ENCODE measurements at regions of chr9 and their contacts with region 1.

Region 1: DNA sequence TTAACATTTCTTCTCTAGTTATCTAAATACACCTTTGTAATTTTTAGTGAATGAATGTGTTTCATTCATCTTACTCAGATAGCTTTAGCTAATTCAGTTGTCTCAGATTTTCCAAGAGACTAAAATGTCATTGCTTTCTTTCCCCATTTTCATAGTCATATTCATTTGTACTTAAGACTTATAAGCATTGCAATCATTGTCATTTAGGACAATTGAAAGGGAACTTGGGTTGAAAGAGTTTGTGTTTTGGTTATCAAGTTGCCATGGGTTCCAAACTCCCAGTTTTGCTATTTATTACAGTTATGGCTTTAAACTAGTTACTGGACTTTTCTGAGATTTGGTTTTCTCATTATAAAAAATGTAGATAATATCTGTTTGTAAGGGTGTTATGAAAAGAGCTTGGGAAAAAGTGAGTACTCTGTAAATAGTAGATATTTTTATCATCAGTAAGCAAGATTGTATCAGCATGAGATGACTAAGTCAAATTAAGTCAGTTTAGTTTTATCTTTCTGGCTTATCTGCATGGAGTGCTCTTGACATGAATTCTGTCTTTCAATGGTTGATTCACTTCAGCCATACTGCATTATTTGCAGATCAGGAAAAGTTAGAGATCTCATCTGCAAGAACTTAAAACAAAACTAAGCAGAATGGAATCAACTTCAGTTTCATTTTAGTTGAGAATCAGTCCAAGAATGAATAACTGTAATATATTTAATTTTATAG is 107.5 kb downstream of the PBX3 start:
- DNase-seq: no peak
- ATAC-seq: no peak
- H3K4me3 ChIP-seq: no peak overlapping the region
- H3K4me3 Mint-ChIP-seq: no peak overlapping the region
- H3K27ac ChIP-seq: no peak overlapping the region
- H3K27ac Mint-ChIP-seq: no peak overlapping the region
- H3K4me1 ChIP-seq: no peaks in the 10 kb centered on the region
- H3K4me1 Mint-ChIP-seq: peaks cover 8% of the 10 kb centered on the region
- H3K27me3 ChIP-seq: no peaks in the 10 kb centered on the region
- H3K27me3 Mint-ChIP-seq: no peaks in the 10 kb centered on the region
- CTCF ChIP-seq: no peak

Region 2: DNA sequence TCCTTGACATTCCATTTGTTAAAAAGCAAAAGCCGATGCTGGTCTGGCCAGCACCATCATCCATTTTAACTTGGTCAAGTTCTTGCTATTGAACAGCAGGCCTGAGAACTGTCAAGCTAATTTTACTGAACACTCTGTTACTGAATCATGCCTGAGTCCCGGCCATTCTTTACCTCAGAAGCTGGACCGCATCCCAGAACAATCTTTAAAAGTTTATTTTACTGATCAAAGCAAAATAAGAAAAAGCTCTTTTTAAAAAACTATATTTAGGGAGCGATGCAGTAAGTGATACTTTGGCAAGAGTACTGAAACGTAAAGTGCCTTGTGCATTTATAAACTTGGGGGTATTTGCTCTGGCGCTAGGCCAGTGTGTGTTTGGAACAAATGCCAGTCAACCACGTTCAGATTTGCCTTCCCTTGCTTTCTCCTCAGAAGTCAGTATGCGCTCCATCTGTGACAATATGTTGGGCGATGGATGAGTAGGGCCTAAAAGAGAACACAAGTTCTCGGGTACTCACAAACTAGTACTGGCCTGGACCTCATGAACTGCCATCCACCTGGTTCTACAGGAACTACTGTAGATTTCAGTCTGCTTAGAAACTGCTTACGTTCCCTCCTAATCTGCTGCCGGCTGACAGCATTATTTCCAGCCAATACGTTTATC is 309.6 kb before region 1 on chr9:
- CTCF ChIA-PET with region 1: no interaction called
- POLR2A ChIA-PET with region 1: no interaction called
- intact Hi-C with region 1: no loop called
- DNase-seq: no peak
- ATAC-seq: no peak
- H3K4me3 ChIP-seq: no peak overlapping the region
- H3K4me3 Mint-ChIP-seq: no peak overlapping the region
- H3K27ac ChIP-seq: no peak overlapping the region
- H3K27ac Mint-ChIP-seq: no peak overlapping the region
- H3K4me1 ChIP-seq: no peaks in the 10 kb centered on the region
- H3K4me1 Mint-ChIP-seq: no peaks in the 10 kb centered on the region
- H3K27me3 ChIP-seq: no peaks in the 10 kb centered on the region
- H3K27me3 Mint-ChIP-seq: no peaks in the 10 kb centered on the region
- CTCF ChIP-seq: no peak

Region 3: GRCh38 chr9:125815568-125815967 is 39.1 kb before region 1 on chr9:
- CTCF ChIA-PET with region 1: interaction called, 6 read pairs
- POLR2A ChIA-PET with region 1: interaction called, 3 read pairs
- intact Hi-C with region 1: loop called in 1 of 2 experiments (anchors 5 kb)
- DNase-seq: no peak
- ATAC-seq: no peak
- H3K4me3 ChIP-seq: no peak overlapping the region
- H3K4me3 Mint-ChIP-seq: no peak overlapping the region
- H3K27ac ChIP-seq: no peak overlapping the region
- H3K27ac Mint-ChIP-seq: no peak overlapping the region
- H3K4me1 ChIP-seq: no peaks in the 10 kb centered on the region
- H3K4me1 Mint-ChIP-seq: peaks cover 7% of the 10 kb centered on the region
- H3K27me3 ChIP-seq: no peaks in the 10 kb centered on the region
- H3K27me3 Mint-ChIP-seq: no peaks in the 10 kb centered on the region
- CTCF ChIP-seq: no peak

Region 4: DNA sequence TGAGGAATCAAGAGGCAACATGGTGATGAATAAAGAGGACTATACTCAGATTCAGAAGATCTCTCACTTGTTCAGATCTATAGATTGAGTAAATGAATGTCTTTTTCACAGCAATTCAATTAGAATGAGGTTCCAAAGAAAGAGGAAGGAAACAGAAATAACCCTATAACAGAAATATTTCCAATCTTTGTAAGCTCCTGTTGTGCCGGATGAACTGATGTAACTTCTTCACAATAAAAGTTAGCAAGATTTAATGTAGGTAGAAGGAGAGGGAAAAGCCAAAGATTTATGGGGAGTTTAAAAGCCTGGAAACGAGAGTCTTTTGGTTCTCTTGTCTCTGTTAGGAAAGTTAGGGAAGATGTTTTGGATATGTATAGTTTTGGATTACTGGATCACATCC is 15.4 kb before region 1 on chr9:
- CTCF ChIA-PET with region 1: no interaction called
- POLR2A ChIA-PET with region 1: interaction called, 3 read pairs
- intact Hi-C with region 1: loop called in 1 of 2 experiments (anchors 2 kb)
- DNase-seq: no peak
- ATAC-seq: no peak
- H3K4me3 ChIP-seq: no peak overlapping the region
- H3K4me3 Mint-ChIP-seq: no peak overlapping the region
- H3K27ac ChIP-seq: no peak overlapping the region
- H3K27ac Mint-ChIP-seq: no peak overlapping the region
- H3K4me1 ChIP-seq: no peaks in the 10 kb centered on the region
- H3K4me1 Mint-ChIP-seq: peaks cover 19% of the 10 kb centered on the region
- H3K27me3 ChIP-seq: no peaks in the 10 kb centered on the region
- H3K27me3 Mint-ChIP-seq: no peaks in the 10 kb centered on the region
- CTCF ChIP-seq: no peak

Region 5: GRCh38 chr9:126081746-126082145 is 227.0 kb after region 1 on chr9:
- CTCF ChIA-PET with region 1: no interaction called
- POLR2A ChIA-PET with region 1: no interaction called
- intact Hi-C with region 1: no loop called
- DNase-seq: no peak
- ATAC-seq: no peak
- H3K4me3 ChIP-seq: no peak overlapping the region
- H3K4me3 Mint-ChIP-seq: no peak overlapping the region
- H3K27ac ChIP-seq: no peak overlapping the region
- H3K27ac Mint-ChIP-seq: no peak overlapping the region
- H3K4me1 ChIP-seq: peaks cover 6% of the 10 kb centered on the region
- H3K4me1 Mint-ChIP-seq: peaks cover 13% of the 10 kb centered on the region
- H3K27me3 ChIP-seq: peaks cover 0 to 2% of the 10 kb centered on the region in 2 experiments
- H3K27me3 Mint-ChIP-seq: peaks cover 20% of the 10 kb centered on the region
- CTCF ChIP-seq: no peak

Region 6: GRCh38 chr9:126151031-126151685 is 296.4 kb after region 1 on chr9:
- CTCF ChIA-PET with region 1: no interaction called
- POLR2A ChIA-PET with region 1: no interaction called
- intact Hi-C with region 1: no loop called
- DNase-seq: peak in 1 of 9 experiments; percentile 27
- ATAC-seq: no peak
- H3K4me3 ChIP-seq: no peak overlapping the region
- H3K4me3 Mint-ChIP-seq: no peak overlapping the region
- H3K27ac ChIP-seq: no peak overlapping the region
- H3K27ac Mint-ChIP-seq: no peak overlapping the region
- H3K4me1 ChIP-seq: peaks cover 5% of the 10 kb centered on the region
- H3K4me1 Mint-ChIP-seq: peaks cover 2% of the 10 kb centered on the region
- H3K27me3 ChIP-seq: no peaks in the 10 kb centered on the region
- H3K27me3 Mint-ChIP-seq: peaks cover 17% of the 10 kb centered on the region
- CTCF ChIP-seq: no peak